H1 (cell line): ENCODE measurements at regions of chr11 and their contacts with region 1.

Region 1: DNA sequence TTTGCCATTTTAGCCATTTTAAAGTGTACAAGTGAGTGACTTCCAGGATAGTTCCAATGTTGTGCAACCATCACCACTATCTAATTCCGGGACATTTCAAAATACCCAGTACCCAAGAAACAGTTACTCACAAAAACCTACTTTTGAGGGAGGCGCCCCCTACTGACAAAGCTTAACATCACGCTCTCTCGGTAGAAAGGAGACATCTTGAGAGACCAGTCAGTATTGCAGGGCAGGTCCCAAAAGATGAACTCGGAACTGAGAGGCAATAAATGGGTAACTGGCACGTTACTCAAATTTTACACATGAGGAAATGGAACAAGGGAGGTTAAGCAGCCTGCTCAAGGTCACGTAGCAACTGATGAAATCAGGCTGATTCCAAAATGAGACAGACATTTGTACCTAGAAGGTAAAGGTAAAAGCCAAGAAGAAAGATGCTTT is 50.0 kb upstream of the POU2AF1 start:
- DNase-seq: peak in 1 of 2 experiments; percentile 83
- H3K4me3 ChIP-seq: no peak overlapping the region
- H3K27ac ChIP-seq: no peak overlapping the region
- H3K4me1 ChIP-seq: peaks cover 0 to 3% (median 0%) of the 10 kb centered on the region in 4 experiments; a peak in 1 of 7 replicates
- H3K27me3 ChIP-seq: no peaks in the 10 kb centered on the region
- CTCF ChIP-seq: peak; percentile 12 to 97 (median 85)
- EP300 ChIP-seq: no peak
- POLR2A ChIP-seq: no peak
- RAD21 ChIP-seq: peak; percentile 55 to 65

Region 2: DNA sequence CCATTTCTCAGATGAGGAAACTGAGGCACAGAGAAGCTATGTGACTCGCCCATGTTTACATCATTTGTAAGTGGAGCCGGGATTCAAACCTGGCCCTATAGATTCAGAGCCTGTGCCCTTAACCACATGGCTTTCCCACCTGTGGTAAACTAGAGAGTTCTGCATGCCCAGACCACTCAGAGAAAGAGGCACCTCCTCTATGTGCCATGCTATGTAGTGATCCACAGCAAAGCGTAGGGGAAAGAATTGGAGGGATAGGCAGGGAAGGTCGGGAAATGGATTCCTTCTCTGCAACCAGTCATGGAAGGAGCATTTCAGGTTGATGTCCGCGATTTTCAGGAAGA is 199.0 kb before region 1 on chr11:
- CTCF ChIA-PET with region 1: interaction called, 11 read pairs
- POLR2A ChIA-PET with region 1: no interaction called
- DNase-seq: no peak
- H3K4me3 ChIP-seq: no peak overlapping the region
- H3K27ac ChIP-seq: no peak overlapping the region
- H3K4me1 ChIP-seq: no peaks in the 10 kb centered on the region
- H3K27me3 ChIP-seq: no peaks in the 10 kb centered on the region
- CTCF ChIP-seq: no peak
- EP300 ChIP-seq: no peak
- POLR2A ChIP-seq: no peak
- RAD21 ChIP-seq: no peak

Region 3: DNA sequence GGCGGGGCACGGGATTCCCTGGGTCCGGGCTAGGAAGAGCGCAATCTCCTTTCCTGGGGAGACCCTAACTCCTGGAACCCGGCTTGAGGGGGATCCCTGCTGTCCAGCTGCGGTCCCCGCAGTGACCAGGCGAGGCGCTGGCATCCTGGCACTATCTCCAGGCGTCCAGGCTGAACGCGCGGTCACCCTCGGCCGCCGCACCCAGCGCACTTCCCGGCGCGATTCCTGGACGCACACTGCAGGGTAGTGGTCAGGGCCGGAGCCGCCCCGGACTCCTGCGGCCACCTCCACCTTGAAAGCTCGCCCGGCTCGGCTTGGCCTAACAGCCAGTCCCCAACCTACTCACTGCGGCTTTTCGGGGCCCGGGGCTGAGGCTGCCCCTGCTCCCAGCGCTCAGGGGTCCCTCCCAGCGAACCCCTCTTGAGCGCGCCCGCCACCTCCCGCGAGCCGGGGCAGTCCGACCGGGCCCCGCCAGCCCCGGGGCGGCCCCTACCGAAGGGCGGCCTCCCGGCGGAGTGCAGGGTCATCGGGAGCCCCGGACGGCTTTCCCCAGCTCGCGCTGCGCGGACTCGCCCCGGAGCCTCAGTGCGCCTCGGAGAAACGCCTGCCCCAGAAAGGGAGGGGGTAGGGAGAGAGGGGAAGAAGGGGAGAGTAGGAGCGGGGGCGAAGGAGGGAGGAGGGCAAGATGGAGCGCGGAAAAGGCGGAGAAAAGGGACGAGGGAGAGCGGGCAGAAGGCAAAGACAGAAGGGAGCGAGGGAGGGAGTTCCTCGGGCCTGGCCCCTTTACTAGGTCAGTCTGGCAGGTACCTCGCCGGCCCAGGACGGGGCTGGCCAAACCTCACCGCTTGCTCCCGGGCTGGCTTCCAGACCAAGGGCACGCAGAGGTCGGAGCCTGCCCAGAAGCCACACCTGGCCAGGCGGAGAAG is 129.7 kb before region 1 on chr11:
- CTCF ChIA-PET with region 1: interaction called, 34 read pairs
- POLR2A ChIA-PET with region 1: interaction called, 3 read pairs
- DNase-seq: peak in 1 of 2 experiments; percentile 83
- H3K4me3 ChIP-seq: peak overlapping the region; percentile 69 to 95 (median 76)
- H3K27ac ChIP-seq: no peak overlapping the region
- H3K4me1 ChIP-seq: peaks cover 1 to 9% (median 6%) of the 10 kb centered on the region in 4 experiments; a peak in 6 of 7 replicates
- H3K27me3 ChIP-seq: peaks cover 0 to 33% (median 16%) of the 10 kb centered on the region in 4 experiments; a peak in 5 of 7 replicates
- CTCF ChIP-seq: peak; percentile 49 to 69 (median 64)
- EP300 ChIP-seq: no peak
- POLR2A ChIP-seq: peak in 1 of 2 experiments; percentile 52; a peak in 1 of 3 replicates
- RAD21 ChIP-seq: peak in 1 of 2 experiments; percentile 34; a peak in 1 of 4 replicates

Region 4: GRCh38 chr11:111446404-111447111 is 17.5 kb after region 1 on chr11:
- CTCF ChIA-PET with region 1: interaction called, 104 read pairs
- POLR2A ChIA-PET with region 1: no interaction called
- DNase-seq: peak in 1 of 2 experiments; percentile 63
- H3K4me3 ChIP-seq: no peak overlapping the region
- H3K27ac ChIP-seq: no peak overlapping the region
- H3K4me1 ChIP-seq: peaks cover 0 to 6% (median 2%) of the 10 kb centered on the region in 4 experiments; a peak in 4 of 7 replicates
- H3K27me3 ChIP-seq: no peaks in the 10 kb centered on the region
- CTCF ChIP-seq: peak; percentile 88 to 95 (median 88)
- EP300 ChIP-seq: no peak
- POLR2A ChIP-seq: no peak
- RAD21 ChIP-seq: peak; percentile 95 to 98

Region 5: GRCh38 chr11:111454561-111455192 is 25.6 kb after region 1 on chr11:
- CTCF ChIA-PET with region 1: interaction called, 14 read pairs
- POLR2A ChIA-PET with region 1: no interaction called
- DNase-seq: peak in 1 of 2 experiments; percentile 88
- H3K4me3 ChIP-seq: peak overlapping the region; percentile 6 to 56 (median 22); a peak in 6 of 8 replicates
- H3K27ac ChIP-seq: no peak overlapping the region
- H3K4me1 ChIP-seq: peaks cover 0 to 7% (median 4%) of the 10 kb centered on the region in 4 experiments; a peak in 3 of 7 replicates
- H3K27me3 ChIP-seq: no peaks in the 10 kb centered on the region
- CTCF ChIP-seq: peak; percentile 48 to 62 (median 56)
- EP300 ChIP-seq: no peak
- POLR2A ChIP-seq: no peak
- RAD21 ChIP-seq: peak; percentile 61 to 67

Region 6: GRCh38 chr11:111730871-111731591 is 301.9 kb after region 1 on chr11:
- CTCF ChIA-PET with region 1: no interaction called
- POLR2A ChIA-PET with region 1: no interaction called
- DNase-seq: no peak
- H3K4me3 ChIP-seq: no peak overlapping the region
- H3K27ac ChIP-seq: no peak overlapping the region
- H3K4me1 ChIP-seq: peaks cover 0 to 12% (median 2%) of the 10 kb centered on the region in 4 experiments; a peak in 5 of 7 replicates
- H3K27me3 ChIP-seq: no peaks in the 10 kb centered on the region
- CTCF ChIP-seq: no peak
- EP300 ChIP-seq: no peak
- POLR2A ChIP-seq: no peak
- RAD21 ChIP-seq: no peak